ENCODE measurements at regions of chr7 and their contacts with region 1.

Region 1: GRCh38 chr7:142853739-142854371 is 1.0 kb upstream of the EPHB6 start:
- DNase-seq: peak; percentile 78 to 85
- H3K4me3 ChIP-seq: peak overlapping the region; percentile 95
- H3K27ac ChIP-seq: peak overlapping the region; percentile 83
- H3K4me1 ChIP-seq: peaks cover 40% of the 10 kb centered on the region
- H3K27me3 ChIP-seq: no peaks in the 10 kb centered on the region
- CTCF ChIP-seq: peak; percentile 92

Region 2: GRCh38 chr7:142357953-142358520 is 495.8 kb before region 1 on chr7:
- CTCF ChIA-PET with region 1: no interaction called
- POLR2A ChIA-PET with region 1: no interaction called
- intact Hi-C with region 1: loop called (anchors 1 kb)
- DNase-seq: peak; percentile 71 to 75
- H3K4me3 ChIP-seq: peak overlapping the region; percentile 27; the same call in 1 of the 2 replicates
- H3K27ac ChIP-seq: peak overlapping the region; percentile 0; the same call in 1 of the 2 replicates
- H3K4me1 ChIP-seq: peaks cover 28% of the 10 kb centered on the region
- H3K27me3 ChIP-seq: no peaks in the 10 kb centered on the region
- CTCF ChIP-seq: peak; percentile 98

Region 3: DNA sequence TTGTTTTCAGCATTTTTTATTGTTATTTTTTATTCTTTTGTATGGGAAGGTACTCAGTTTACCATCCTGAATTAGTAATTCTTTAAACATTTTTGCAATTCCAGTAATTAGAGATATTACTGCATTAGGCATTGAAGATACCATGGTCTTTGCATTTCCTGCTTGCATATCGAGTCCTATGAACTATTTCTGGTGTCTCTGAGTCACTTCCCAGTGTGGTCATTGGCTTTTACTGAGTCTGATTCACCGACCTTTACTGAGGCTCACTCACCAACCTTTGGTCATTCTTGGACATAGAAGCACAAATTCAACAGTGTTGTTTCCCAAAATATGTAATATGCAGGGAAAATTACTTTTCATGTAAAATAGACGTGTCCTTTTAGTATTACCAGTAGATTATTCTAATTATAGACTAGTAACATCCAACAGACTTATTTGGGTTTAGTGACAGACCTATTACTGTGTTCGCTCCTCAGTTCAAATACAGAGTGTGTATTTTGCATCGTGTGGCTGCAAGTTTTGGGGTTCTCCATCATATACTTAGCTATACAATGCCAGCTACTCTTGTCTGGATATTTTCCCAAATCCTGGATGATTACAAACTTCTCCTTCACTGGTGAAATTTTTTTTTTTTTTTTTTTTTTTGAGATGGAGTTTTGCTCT is 285.3 kb before region 1 on chr7:
- CTCF ChIA-PET with region 1: no interaction called
- POLR2A ChIA-PET with region 1: no interaction called
- intact Hi-C with region 1: no loop called
- DNase-seq: peak in 1 of 2 experiments; percentile 77
- H3K4me3 ChIP-seq: no peak overlapping the region
- H3K27ac ChIP-seq: peak overlapping the region; percentile 52
- H3K4me1 ChIP-seq: peaks cover 38% of the 10 kb centered on the region
- H3K27me3 ChIP-seq: no peaks in the 10 kb centered on the region
- CTCF ChIP-seq: no peak

Region 4: DNA sequence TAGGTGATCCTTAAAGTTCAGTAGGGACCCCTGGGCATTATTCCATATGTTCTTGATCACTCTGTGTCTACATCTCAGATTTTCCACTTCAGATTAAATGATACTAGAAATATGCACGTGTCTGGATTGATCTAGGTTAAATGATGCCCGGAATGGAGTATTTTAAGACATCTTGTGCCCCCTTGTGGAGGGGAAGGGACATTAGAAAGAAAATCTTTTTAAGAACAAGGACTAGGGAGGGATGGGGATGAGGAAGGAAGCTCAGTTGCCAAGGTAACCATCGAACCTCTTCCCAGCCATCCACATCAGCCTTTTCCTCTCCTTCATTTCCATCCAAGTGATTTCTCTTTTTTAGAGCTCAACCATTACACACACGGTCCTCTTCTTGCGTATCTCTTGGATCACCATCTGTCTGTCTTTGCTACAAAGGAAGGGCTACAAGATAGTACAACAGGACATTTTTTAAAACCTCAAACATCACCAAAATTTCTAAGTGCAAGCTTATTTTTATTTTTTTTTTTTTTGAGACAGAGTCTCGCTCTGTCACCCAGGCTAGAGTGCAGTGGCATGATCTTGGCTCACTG is 42.6 kb before region 1 on chr7:
- CTCF ChIA-PET with region 1: interaction called, 9 read pairs
- POLR2A ChIA-PET with region 1: interaction called, 5 read pairs
- intact Hi-C with region 1: loop called (anchors 1 kb)
- DNase-seq: peak; percentile 22 to 78
- H3K4me3 ChIP-seq: no peak overlapping the region
- H3K27ac ChIP-seq: peak overlapping the region; percentile 96
- H3K4me1 ChIP-seq: peaks cover 84% of the 10 kb centered on the region
- H3K27me3 ChIP-seq: no peaks in the 10 kb centered on the region
- CTCF ChIP-seq: peak; percentile 95

Region 5: DNA sequence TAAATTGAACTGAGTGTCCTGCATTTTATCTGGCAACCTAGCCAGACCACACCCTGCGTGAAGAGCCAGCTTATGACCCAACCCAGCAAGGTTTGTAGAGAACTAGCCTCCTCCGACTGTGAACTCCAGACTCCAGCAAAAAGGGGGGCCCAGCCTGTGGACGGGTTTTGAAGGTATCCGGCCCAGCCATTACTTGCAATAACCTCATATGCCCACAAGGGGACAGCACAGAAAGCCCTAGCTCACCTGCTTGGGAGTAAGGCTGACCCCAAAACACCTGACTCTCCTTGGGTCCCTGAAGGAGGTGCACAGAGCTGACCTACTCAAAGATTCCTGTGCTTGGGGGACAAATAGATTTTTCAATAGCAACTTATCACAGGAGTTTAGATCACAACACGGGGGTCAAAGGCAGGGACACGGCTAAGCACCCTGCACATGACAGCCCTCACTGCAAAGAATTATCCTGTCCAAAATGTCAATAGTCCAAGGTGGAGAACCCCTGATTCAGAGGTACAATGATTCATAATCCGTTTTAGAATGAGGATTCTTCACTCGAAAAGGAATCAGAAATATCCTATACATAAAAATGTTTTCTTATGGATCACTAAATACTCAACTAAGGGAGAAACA is 27.1 kb after region 1 on chr7:
- CTCF ChIA-PET with region 1: no interaction called
- POLR2A ChIA-PET with region 1: no interaction called
- intact Hi-C with region 1: loop called (anchors 1 kb)
- DNase-seq: peak in 1 of 2 experiments; percentile 46
- H3K4me3 ChIP-seq: no peak overlapping the region
- H3K27ac ChIP-seq: no peak overlapping the region
- H3K4me1 ChIP-seq: peaks cover 33% of the 10 kb centered on the region
- H3K27me3 ChIP-seq: no peaks in the 10 kb centered on the region
- CTCF ChIP-seq: peak; percentile 91

Region 6: DNA sequence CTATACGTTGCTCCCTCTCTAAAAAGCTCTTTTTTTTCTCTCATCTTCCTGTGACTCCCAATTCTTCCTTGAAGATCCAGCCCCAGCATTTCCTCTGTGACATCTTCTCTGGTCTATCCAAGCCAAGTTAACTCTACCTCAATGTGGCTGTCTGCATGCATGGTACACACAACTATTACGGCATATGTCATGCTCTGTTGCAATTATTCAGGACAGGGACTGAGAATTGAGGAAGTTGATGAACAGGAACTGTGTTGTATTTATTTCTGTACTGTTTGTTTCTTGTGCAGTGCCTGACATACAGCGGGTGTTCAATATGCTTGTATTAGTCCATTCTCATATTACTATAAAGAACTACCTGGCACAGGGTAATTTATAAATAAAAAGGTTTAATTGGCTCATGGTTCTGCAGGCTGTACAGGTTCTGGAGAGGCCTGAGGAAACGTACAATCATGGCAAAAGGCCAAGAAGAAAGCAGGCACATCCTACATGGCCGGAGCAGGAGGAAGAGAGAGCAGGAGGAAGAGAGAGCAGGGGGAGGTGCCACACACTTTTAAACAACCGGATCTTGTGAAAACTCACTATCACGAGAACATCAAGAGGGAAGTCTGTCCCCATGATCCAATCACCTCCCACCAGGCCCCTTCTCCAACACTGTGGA is 73.4 kb after region 1 on chr7:
- CTCF ChIA-PET with region 1: interaction called, 10 read pairs
- POLR2A ChIA-PET with region 1: no interaction called
- intact Hi-C with region 1: no loop called
- DNase-seq: no peak
- H3K4me3 ChIP-seq: no peak overlapping the region
- H3K27ac ChIP-seq: no peak overlapping the region
- H3K4me1 ChIP-seq: no peaks in the 10 kb centered on the region
- H3K27me3 ChIP-seq: no peaks in the 10 kb centered on the region
- CTCF ChIP-seq: no peak

Measured in PC-9 (cell line).